CD8-positive, alpha-beta T cell (primary cell): ENCODE measurements at regions of chr4 and their contacts with region 1.

Region 1: GRCh38 chr4:2761035-2761923 is 5.1 kb upstream of the TNIP2 start:
- DNase-seq: no peak
- ATAC-seq: no peak
- H3K4me3 ChIP-seq: no peak overlapping the region
- H3K4me3 Mint-ChIP-seq: no peak overlapping the region
- H3K27ac ChIP-seq: no peak overlapping the region
- H3K27ac Mint-ChIP-seq: no peak overlapping the region
- H3K4me1 ChIP-seq: peaks cover 15% of the 10 kb centered on the region
- H3K4me1 Mint-ChIP-seq: peaks cover 15% of the 10 kb centered on the region
- H3K27me3 ChIP-seq: no peaks in the 10 kb centered on the region
- H3K27me3 Mint-ChIP-seq: no peaks in the 10 kb centered on the region
- CTCF ChIP-seq: no peak

Region 2: DNA sequence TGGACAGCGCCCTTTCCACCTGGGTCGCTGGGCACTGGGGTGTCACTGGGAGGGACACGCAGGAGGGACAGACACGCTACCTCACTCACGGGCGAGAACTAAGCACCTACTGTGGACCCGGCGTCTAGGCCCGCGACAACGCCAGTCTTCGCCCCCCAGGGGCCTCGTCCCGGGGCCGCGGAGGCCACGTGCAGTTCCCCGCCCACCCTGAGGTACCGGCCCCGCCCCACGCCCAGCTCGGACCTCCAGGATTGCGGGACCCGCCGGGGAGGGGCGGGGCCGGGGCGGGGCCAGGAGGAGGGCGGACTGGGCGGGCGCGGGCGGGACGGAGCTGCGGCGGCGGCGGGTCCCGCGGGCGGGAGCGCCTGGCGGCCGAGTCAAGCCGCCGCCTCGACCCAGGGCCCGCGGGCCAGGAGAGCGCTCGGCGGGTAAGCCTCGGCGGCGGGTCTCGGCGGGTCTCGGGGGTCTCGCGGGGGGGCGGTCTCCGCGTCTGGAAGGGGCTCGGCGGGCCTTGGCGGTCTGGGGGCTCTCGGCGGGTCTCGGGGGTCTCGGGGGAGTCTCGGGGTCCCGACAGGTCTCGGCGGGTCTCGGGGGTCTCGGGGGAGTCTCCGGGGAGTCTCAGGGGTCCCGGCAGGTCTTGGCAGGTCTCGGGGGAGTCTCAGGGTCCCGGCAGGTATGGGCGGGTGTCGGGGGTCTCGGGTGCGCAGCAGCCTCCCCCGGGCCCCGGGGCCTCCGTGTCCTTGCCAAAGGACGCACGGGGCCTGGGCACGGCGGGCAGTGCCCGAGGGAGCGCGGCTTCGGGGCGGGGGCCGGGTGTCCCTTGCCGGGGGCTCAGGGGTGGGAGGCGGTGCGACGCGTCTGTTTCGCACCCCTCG is 31.7 kb after region 1 on chr4 and contains the start of gene SH3BP2:
- CTCF ChIA-PET with region 1: no interaction called
- POLR2A ChIA-PET with region 1: interaction called, 4 read pairs
- intact Hi-C with region 1: loop called in 1 of 2 experiments (anchors 2 kb)
- DNase-seq: peak in 6 of 9 experiments; percentile 53 to 80 (median 66)
- ATAC-seq: peak; percentile 66
- H3K4me3 ChIP-seq: peak within 1 kb of the TSS; percentile 44 to 48
- H3K4me3 Mint-ChIP-seq: peak within 1 kb of the TSS; percentile 85
- H3K27ac ChIP-seq: no peak within 1 kb of the TSS
- H3K27ac Mint-ChIP-seq: peak within 1 kb of the TSS; percentile 60
- H3K4me1 ChIP-seq: peaks cover 44% of the 10 kb centered on the region
- H3K4me1 Mint-ChIP-seq: peaks cover 49% of the 10 kb centered on the region
- H3K27me3 ChIP-seq: no peaks in the 10 kb centered on the region
- H3K27me3 Mint-ChIP-seq: no peaks in the 10 kb centered on the region
- CTCF ChIP-seq: no peak
- total RNA-seq, gene SH3BP2: 22.4 to 24.8 TPM

Region 3: GRCh38 chr4:2837904-2838496 is 76.7 kb after region 1 on chr4:
- CTCF ChIA-PET with region 1: interaction called, 10 read pairs
- POLR2A ChIA-PET with region 1: interaction called, 3 read pairs
- intact Hi-C with region 1: loop called in 1 of 2 experiments (anchors 1 kb)
- DNase-seq: peak; percentile 43 to 91 (median 80)
- ATAC-seq: peak; percentile 96
- H3K4me3 ChIP-seq: peak overlapping the region; percentile 41 to 42
- H3K4me3 Mint-ChIP-seq: peak overlapping the region; percentile 81
- H3K27ac ChIP-seq: peak overlapping the region; percentile 40 to 74
- H3K27ac Mint-ChIP-seq: peak overlapping the region; percentile 94
- H3K4me1 ChIP-seq: peaks cover 60% of the 10 kb centered on the region
- H3K4me1 Mint-ChIP-seq: peaks cover 68% of the 10 kb centered on the region
- H3K27me3 ChIP-seq: no peaks in the 10 kb centered on the region
- H3K27me3 Mint-ChIP-seq: no peaks in the 10 kb centered on the region
- CTCF ChIP-seq: no peak

Region 4: GRCh38 chr4:2871911-2872310 is 110.6 kb after region 1 on chr4:
- CTCF ChIA-PET with region 1: interaction called, 8 read pairs
- POLR2A ChIA-PET with region 1: no interaction called
- intact Hi-C with region 1: loop called in 1 of 2 experiments (anchors 1 kb)
- DNase-seq: peak in 2 of 9 experiments; percentile 24 to 48
- ATAC-seq: peak; percentile 56
- H3K4me3 ChIP-seq: no peak overlapping the region
- H3K4me3 Mint-ChIP-seq: no peak overlapping the region
- H3K27ac ChIP-seq: peak overlapping the region in 1 of 2 experiments; percentile 34
- H3K27ac Mint-ChIP-seq: peak overlapping the region; percentile 43
- H3K4me1 ChIP-seq: peaks cover 19% of the 10 kb centered on the region
- H3K4me1 Mint-ChIP-seq: peaks cover 72% of the 10 kb centered on the region
- H3K27me3 ChIP-seq: no peaks in the 10 kb centered on the region
- H3K27me3 Mint-ChIP-seq: no peaks in the 10 kb centered on the region
- CTCF ChIP-seq: no peak

Region 5: GRCh38 chr4:2934813-2935761 is 173.8 kb after region 1 on chr4:
- CTCF ChIA-PET with region 1: interaction called, 4 read pairs
- POLR2A ChIA-PET with region 1: interaction called, 3 read pairs
- intact Hi-C with region 1: loop called (anchors 1 to 2 kb)
- DNase-seq: peak; percentile 91 to 99 (median 97)
- ATAC-seq: peak; percentile 55
- H3K4me3 ChIP-seq: peak overlapping the region; percentile 71 to 95
- H3K4me3 Mint-ChIP-seq: peak overlapping the region; percentile 85
- H3K27ac ChIP-seq: peak overlapping the region; percentile 94 to 96
- H3K27ac Mint-ChIP-seq: peak overlapping the region; percentile 90
- H3K4me1 ChIP-seq: peaks cover 55% of the 10 kb centered on the region
- H3K4me1 Mint-ChIP-seq: peaks cover 46% of the 10 kb centered on the region
- H3K27me3 ChIP-seq: no peaks in the 10 kb centered on the region
- H3K27me3 Mint-ChIP-seq: no peaks in the 10 kb centered on the region
- CTCF ChIP-seq: no peak

Region 6: GRCh38 chr4:3037957-3038461 is 276.7 kb after region 1 on chr4:
- CTCF ChIA-PET with region 1: interaction called, 13 read pairs
- POLR2A ChIA-PET with region 1: no interaction called
- intact Hi-C with region 1: loop called (anchors 1 kb)
- DNase-seq: peak in 1 of 9 experiments; percentile 31
- ATAC-seq: no peak
- H3K4me3 ChIP-seq: peak overlapping the region in 1 of 2 experiments; percentile 42
- H3K4me3 Mint-ChIP-seq: peak overlapping the region; percentile 68
- H3K27ac ChIP-seq: no peak overlapping the region
- H3K27ac Mint-ChIP-seq: peak overlapping the region; percentile 4
- H3K4me1 ChIP-seq: peaks cover 30% of the 10 kb centered on the region
- H3K4me1 Mint-ChIP-seq: peaks cover 31% of the 10 kb centered on the region
- H3K27me3 ChIP-seq: peaks cover 0 to 2% of the 10 kb centered on the region in 2 experiments
- H3K27me3 Mint-ChIP-seq: peaks cover 7% of the 10 kb centered on the region
- CTCF ChIP-seq: no peak

Region 7: GRCh38 chr4:3082925-3083515 is 321.7 kb after region 1 on chr4:
- CTCF ChIA-PET with region 1: no interaction called
- POLR2A ChIA-PET with region 1: no interaction called
- intact Hi-C with region 1: no loop called
- DNase-seq: no peak
- ATAC-seq: no peak
- H3K4me3 ChIP-seq: no peak overlapping the region
- H3K4me3 Mint-ChIP-seq: no peak overlapping the region
- H3K27ac ChIP-seq: no peak overlapping the region
- H3K27ac Mint-ChIP-seq: no peak overlapping the region
- H3K4me1 ChIP-seq: peaks cover 12% of the 10 kb centered on the region
- H3K4me1 Mint-ChIP-seq: peaks cover 39% of the 10 kb centered on the region
- H3K27me3 ChIP-seq: no peaks in the 10 kb centered on the region
- H3K27me3 Mint-ChIP-seq: no peaks in the 10 kb centered on the region
- CTCF ChIP-seq: no peak